Spleen (tissue), 13 donors: ENCODE measurements at regions of chr7 and their contacts with region 1.

Region 1: GRCh38 chr7:139359366-139360209 is at the start of gene LUC7L2:
- DNase-seq: peak; percentile 100
- H3K4me3 ChIP-seq: peak within 1 kb of the TSS; percentile 74 to 99 (median 88)
- H3K27ac ChIP-seq: peak within 1 kb of the TSS; percentile 96 to 100 (median 100)
- H3K4me1 ChIP-seq: peaks cover 21 to 58% (median 41%) of the 10 kb centered on the region in 6 donors
- H3K27me3 ChIP-seq: no peaks in the 10 kb centered on the region
- CTCF ChIP-seq: peak in 8 of 11 experiments; percentile 18 to 62 (median 42)
- POLR2A ChIP-seq: peak; percentile 74 to 89 (median 81)
- total RNA-seq, gene LUC7L2: 75.0 to 105 (median 84.8) TPM

Region 2: GRCh38 chr7:139340037-139340807 is 19.4 kb before region 1 on chr7:
- intact Hi-C with region 1: loop called (anchors 2 kb)
- DNase-seq: peak; percentile 99
- H3K4me3 ChIP-seq: peak overlapping the region; percentile 60 to 88 (median 74)
- H3K27ac ChIP-seq: peak overlapping the region; percentile 98 to 100 (median 100)
- H3K4me1 ChIP-seq: peaks cover 9 to 41% (median 21%) of the 10 kb centered on the region in 6 donors
- H3K27me3 ChIP-seq: no peaks in the 10 kb centered on the region
- CTCF ChIP-seq: peak; percentile 49 to 83 (median 73)
- POLR2A ChIP-seq: peak in 2 of 3 donors; percentile 19 to 28